ENCODE measurements at regions of chr13 and their contacts with region 1.

Region 1: DNA sequence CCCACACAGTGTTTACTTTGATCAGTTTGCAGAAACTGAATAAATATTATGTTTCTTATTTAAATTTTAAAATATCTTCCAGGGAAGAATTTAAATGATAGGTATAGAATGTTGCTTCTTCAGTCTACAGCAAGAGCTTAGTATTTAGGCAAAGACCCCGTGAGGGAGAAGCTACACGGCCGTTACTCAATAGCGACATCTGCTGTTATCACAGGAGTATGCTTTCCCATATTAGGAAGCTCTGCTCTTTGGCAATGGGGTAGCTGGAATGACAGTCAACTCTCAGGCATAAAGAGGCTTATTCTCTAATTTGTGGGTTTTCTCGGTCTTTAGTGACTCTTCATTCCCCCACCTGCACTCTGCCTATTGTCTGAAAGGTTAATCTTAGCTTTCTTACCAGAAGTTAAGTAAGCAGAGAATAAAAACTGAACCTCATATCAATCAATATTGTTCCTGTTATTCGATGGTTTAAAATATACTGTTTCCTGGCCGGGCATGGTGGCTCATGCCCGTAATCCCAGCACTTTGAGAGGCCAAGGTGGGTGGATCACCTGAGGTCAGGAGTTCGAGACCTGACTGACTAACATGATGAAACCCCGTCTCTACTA is 13.2 kb upstream of the LHFPL6 start:
- DNase-seq: peak in 36 of 42 donors; percentile 8 to 84 (median 61)

Region 2: GRCh38 chr13:38850868-38851626 is 765.1 kb before region 1 on chr13:
- intact Hi-C with region 1: no loop called
- DNase-seq: no peak

Region 3: DNA sequence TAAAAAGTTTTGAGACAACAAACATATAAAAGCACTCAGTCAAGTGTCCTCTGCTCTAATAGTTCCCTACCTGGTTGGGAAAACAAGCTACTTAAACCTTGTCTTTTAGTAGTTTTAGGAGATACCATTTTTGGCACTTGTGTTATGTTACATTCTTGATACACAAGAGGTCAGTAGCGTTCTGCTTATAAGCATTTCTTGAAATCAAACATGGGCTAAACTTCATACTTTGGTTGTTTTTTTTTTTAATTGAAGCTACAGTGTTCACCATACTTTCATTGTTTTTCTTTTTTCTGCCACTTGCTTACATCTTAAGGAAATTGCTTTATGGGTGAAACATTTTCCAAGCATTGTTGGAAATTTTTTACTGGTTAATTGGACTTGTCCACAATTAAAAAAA is 565.0 kb before region 1 on chr13:
- intact Hi-C with region 1: loop called (anchors 5 kb)
- DNase-seq: no peak

Region 4: DNA sequence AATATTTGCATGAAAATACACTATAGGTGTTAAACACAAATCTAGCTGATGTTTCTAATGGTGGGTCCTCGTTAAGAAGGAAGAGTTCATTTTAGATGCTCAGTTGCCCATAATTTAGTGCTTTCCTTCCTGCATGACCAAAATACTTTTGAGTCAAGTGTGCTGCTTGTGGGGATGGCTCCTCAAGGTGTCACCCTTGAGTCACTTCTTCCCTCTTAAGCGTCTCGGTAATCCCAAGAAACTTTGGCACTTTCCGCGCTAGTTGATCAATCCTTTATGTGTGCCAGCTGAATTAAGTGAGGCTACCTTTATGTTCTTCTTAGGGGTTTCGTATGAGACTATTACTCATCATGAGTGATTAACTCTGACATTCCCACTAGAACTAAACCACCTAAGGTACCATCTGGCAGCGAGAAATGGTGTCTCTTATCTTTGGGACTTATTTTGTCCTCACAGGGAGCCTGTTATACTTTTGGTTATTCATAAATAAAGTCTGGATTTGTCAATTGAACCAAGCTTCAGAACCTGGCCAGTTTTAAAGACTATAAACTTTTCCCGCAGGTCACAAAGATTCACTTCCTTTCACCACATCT is 471.2 kb before region 1 on chr13:
- intact Hi-C with region 1: loop called (anchors 2 kb)
- DNase-seq: peak; percentile 9 to 87 (median 69)

Region 5: GRCh38 chr13:39415008-39415802 is 201.0 kb before region 1 on chr13:
- intact Hi-C with region 1: loop called (anchors 5 kb)
- DNase-seq: peak in 41 of 42 donors; percentile 11 to 83 (median 56)

Region 6: GRCh38 chr13:39665763-39666162 is 49.6 kb after region 1 on chr13:
- intact Hi-C with region 1: no loop called
- DNase-seq: no peak

Region 7: DNA sequence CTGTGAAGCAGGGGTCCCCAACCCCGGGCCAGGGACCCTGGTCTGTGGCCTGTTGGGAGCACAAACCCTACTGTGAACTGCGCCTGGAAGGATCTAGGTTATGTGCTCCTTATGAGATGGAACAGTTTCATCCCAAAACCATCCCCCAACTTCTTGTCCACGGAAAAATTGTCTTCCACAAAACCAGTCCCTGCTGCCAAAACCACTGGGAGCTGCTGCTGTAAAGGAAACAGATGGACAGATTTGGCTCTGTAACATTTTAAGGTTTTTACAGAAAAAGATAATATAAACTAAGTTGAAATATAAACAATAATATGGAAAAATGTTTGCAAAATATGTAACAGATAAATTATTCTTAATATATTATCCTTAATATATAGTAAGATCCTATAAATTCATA is 113.0 kb after region 1 on chr13:
- intact Hi-C with region 1: no loop called
- DNase-seq: no peak